ENCODE measurements at regions of chr6 and their contacts with region 1.

Region 1: DNA sequence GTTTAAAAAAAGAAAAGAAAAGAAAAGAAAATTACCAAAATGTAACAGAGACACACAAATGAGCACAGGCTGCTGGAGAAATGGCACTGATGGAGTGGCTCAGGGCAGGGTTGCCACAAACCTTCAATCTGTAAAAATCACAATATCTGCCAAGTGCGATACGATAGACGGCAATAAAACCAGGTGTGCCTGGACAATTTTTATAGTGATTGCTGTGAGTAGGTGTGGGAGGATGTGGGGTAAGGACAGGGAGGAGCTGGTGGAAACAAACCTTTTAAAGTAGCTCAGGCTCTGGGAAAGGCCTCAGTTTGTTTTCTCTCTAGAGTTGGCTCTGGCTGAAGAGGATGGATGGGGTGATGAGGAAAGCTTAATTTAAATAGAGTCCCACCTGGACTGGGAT is 592.7 kb upstream of the AGPAT4 start:
- H3K4me3 ChIP-seq: no peak overlapping the region
- H3K27ac ChIP-seq: no peak overlapping the region
- H3K4me1 ChIP-seq: no peaks in the 10 kb centered on the region; the same call in 1 of the 2 replicates
- CTCF ChIP-seq: no peak

Region 2: GRCh38 chr6:161850562-161850961 is 16.0 kb before region 1 on chr6:
- CTCF ChIA-PET with region 1: no interaction called
- POLR2A ChIA-PET with region 1: no interaction called
- H3K4me3 ChIP-seq: no peak overlapping the region
- H3K27ac ChIP-seq: no peak overlapping the region
- H3K4me1 ChIP-seq: no peaks in the 10 kb centered on the region
- CTCF ChIP-seq: no peak

Region 3: DNA sequence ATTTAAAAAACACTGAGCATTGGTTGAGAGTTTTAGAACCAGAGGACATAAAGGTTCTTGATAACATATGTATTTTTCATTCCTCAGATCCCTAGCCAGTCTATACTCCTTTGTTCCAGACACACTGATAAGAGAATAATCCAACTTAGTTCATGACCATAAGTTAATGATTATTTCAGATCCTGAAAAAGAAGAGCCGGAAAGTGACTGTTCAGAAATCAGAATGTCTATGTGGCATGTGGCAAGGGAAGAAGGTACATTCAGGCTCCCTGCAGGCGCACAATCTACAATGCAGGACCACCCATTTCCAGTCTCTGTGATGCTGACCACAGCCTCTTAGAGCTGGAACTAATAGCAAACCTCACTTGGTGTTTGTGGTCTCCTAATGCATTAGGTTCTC is 73.9 kb after region 1 on chr6:
- CTCF ChIA-PET with region 1: interaction called, 10 read pairs
- POLR2A ChIA-PET with region 1: no interaction called
- H3K4me3 ChIP-seq: no peak overlapping the region
- H3K27ac ChIP-seq: no peak overlapping the region
- H3K4me1 ChIP-seq: no peaks in the 10 kb centered on the region
- CTCF ChIP-seq: no peak

Measured in HEK293 (cell line).